ENCODE measurements at regions of chr20 and their contacts with region 1.

Region 1: DNA sequence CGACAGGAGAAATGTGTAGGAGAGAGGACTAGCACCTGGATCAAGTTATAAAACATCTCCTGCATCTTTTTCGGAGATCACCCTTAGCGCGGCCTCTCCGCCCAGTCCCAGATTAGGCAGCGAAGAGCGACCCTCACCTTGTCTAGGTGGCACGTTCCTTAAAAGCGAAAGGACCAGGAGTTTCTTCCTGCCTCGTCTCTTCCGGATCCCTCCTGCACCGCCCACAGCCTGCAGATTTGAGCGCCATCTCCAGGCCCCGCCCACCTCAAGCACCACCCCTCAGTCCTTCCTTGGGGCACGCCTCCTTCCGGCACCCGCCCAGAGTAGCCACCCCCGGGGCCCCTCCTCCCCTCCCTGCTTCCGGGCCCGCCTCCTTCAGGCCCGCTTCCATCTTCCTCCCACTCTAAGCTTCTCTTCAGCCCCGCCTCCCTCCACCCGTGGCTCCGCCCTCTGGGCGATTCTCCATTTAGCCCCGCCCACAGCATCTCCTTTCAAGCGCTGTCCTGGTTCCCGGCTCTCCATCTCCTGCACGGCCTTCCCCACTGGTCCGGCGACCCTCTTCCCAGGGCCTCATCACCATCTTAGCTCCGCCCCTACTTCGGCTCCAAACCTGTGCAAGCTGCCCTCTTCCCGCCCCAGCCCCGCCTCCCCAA is 662 bp upstream of the RALY start:
- DNase-seq: peak; percentile 97 to 100 (median 100)
- ATAC-seq: peak; percentile 91
- H3K4me3 ChIP-seq: peak overlapping the region; percentile 96
- H3K4me3 Mint-ChIP-seq: peak overlapping the region; percentile 87 to 99 (median 96)
- H3K27ac ChIP-seq: peak overlapping the region; percentile 97
- H3K27ac Mint-ChIP-seq: peak overlapping the region; percentile 91 to 99 (median 96)
- H3K4me1 ChIP-seq: peaks cover 32 to 43% of the 10 kb centered on the region in 2 donors
- H3K4me1 Mint-ChIP-seq: peaks cover 44 to 69% (median 60%) of the 10 kb centered on the region in 7 donors
- H3K27me3 ChIP-seq: no peaks in the 10 kb centered on the region
- H3K27me3 Mint-ChIP-seq: no peaks in the 10 kb centered on the region

Region 2: DNA sequence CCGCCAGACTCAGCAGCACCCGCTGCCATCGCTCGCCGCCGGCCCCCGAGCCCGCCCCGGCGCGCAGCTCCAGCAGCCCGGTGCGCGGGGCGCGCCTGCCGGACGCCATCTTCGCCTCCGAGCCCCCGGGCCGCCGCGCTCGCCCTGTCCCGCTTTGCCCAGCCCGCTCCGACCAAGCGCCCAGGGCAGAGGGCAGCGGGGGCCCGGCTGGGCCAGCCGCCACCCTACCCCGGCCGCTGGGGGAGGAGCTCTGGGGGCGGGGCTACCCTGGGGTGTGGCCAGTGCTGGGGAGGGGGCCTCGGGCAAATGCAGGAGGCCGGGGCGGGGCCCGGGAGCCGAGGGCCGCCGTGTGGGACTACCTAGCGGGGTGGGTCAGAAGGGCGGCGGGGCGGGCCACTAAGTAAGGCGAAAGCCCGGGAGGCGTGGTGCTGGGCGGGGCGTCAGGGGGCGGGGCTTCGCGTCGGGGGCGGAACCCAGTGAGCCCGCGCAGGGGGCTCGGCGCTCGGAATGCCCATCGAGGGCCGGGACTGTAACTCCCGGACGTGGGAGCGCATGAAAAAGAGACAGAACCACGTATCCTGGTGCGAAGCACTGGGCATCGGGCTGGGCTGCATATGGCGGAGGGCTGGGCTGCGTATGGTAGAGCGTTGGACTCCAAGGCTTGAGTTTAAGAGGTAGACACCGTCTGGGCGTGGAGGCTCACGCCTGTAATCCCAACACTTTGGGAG is 549.4 kb before region 1 on chr20 and contains the start of gene SNTA1:
- CTCF ChIA-PET with region 1: no interaction called
- POLR2A ChIA-PET with region 1: no interaction called
- intact Hi-C with region 1: loop called in 1 of 2 experiments (anchors 1 kb)
- DNase-seq: peak; percentile 51 to 90 (median 70)
- ATAC-seq: peak; percentile 84
- H3K4me3 ChIP-seq: peak within 1 kb of the TSS; percentile 96
- H3K4me3 Mint-ChIP-seq: peak within 1 kb of the TSS; percentile 82 to 96 (median 92)
- H3K27ac ChIP-seq: peak within 1 kb of the TSS; percentile 62
- H3K27ac Mint-ChIP-seq: peak within 1 kb of the TSS; percentile 69 to 95 (median 90)
- H3K4me1 ChIP-seq: peaks cover 10 to 11% of the 10 kb centered on the region in 2 donors
- H3K4me1 Mint-ChIP-seq: peaks cover 16 to 32% (median 22%) of the 10 kb centered on the region in 7 donors
- H3K27me3 ChIP-seq: no peaks in the 10 kb centered on the region
- H3K27me3 Mint-ChIP-seq: peaks cover 0 to 19% (median 0%) of the 10 kb centered on the region in 5 donors
- total RNA-seq, gene SNTA1: 2.0 to 3.2 (median 2.9) TPM

Region 3: DNA sequence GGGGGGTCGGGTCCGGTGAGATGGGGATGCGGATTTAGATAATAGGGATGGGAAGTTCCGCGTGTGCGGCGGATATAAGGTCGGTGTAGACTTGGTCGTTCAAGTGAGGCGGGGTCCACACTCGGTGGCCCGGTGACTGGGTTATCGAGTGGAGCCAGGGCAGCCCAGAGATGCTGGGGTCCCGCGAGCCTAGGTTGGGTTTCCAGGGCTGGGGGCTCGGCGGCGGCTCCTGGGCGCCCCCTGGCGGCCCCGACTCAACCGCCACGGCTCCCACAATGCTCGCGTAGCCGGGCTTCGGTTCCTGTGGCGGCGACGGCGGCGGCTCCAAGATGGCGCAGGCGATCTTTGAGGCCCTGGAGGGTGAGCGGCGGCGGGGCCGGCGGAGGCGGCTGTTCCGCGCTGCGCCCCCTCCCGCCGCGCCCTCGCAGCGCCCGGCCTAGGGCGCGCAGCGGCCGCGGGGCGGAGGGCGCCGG is 261.3 kb before region 1 on chr20 and contains the start of gene ZNF341:
- CTCF ChIA-PET with region 1: no interaction called
- POLR2A ChIA-PET with region 1: no interaction called
- intact Hi-C with region 1: loop called (anchors 1 kb)
- DNase-seq: peak in 7 of 9 donors; percentile 84 to 92 (median 88)
- ATAC-seq: peak; percentile 92
- H3K4me3 ChIP-seq: peak within 1 kb of the TSS; percentile 84
- H3K4me3 Mint-ChIP-seq: peak within 1 kb of the TSS; percentile 82 to 97 (median 90)
- H3K27ac ChIP-seq: peak within 1 kb of the TSS; percentile 75
- H3K27ac Mint-ChIP-seq: peak within 1 kb of the TSS; percentile 90 to 98 (median 97)
- H3K4me1 ChIP-seq: peaks cover 3 to 18% of the 10 kb centered on the region in 2 donors
- H3K4me1 Mint-ChIP-seq: peaks cover 12 to 36% (median 20%) of the 10 kb centered on the region in 7 donors
- H3K27me3 ChIP-seq: no peaks in the 10 kb centered on the region
- H3K27me3 Mint-ChIP-seq: peaks cover 0 to 3% (median 0%) of the 10 kb centered on the region in 5 donors
- total RNA-seq, gene ZNF341: 3.5 to 6.1 (median 5.5) TPM

Region 4: GRCh38 chr20:34037121-34037520 is 44.1 kb after region 1 on chr20:
- CTCF ChIA-PET with region 1: no interaction called
- POLR2A ChIA-PET with region 1: interaction called, 4 read pairs
- intact Hi-C with region 1: loop called in 1 of 2 experiments (anchors 2 kb)
- DNase-seq: peak in 8 of 9 donors; percentile 21 to 50 (median 43)
- ATAC-seq: peak; percentile 88
- H3K4me3 ChIP-seq: no peak overlapping the region
- H3K4me3 Mint-ChIP-seq: peak overlapping the region; percentile 49 to 80 (median 60)
- H3K27ac ChIP-seq: no peak overlapping the region
- H3K27ac Mint-ChIP-seq: peak overlapping the region in 8 of 9 donors; percentile 17 to 80 (median 63)
- H3K4me1 ChIP-seq: peaks cover 12 to 33% of the 10 kb centered on the region in 2 donors
- H3K4me1 Mint-ChIP-seq: peaks cover 48 to 98% (median 95%) of the 10 kb centered on the region in 7 donors
- H3K27me3 ChIP-seq: no peaks in the 10 kb centered on the region
- H3K27me3 Mint-ChIP-seq: no peaks in the 10 kb centered on the region

Region 5: DNA sequence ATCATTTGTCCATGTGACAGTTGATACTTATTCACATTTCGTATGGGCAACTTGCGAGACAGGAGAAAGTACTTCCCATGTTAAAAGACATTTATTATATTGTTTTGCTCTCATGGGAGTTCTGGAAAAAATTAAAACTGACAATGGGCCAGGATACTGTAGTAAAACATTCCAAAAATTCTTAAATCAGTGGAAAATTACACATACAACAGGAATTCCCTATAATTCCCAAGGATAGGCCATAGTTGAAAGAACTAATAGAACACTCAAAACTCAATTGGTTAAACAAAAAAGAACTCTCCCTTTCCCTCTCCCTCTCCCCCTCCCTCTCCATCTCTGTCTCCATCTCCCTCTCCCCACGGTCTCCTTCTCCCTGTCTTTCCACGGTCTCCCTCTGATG is 138.4 kb after region 1 on chr20:
- CTCF ChIA-PET with region 1: no interaction called
- POLR2A ChIA-PET with region 1: no interaction called
- intact Hi-C with region 1: no loop called
- DNase-seq: no peak
- ATAC-seq: no peak
- H3K4me3 ChIP-seq: no peak overlapping the region
- H3K4me3 Mint-ChIP-seq: no peak overlapping the region
- H3K27ac ChIP-seq: no peak overlapping the region
- H3K27ac Mint-ChIP-seq: no peak overlapping the region
- H3K4me1 ChIP-seq: no peaks in the 10 kb centered on the region
- H3K4me1 Mint-ChIP-seq: peaks cover 0 to 6% (median 4%) of the 10 kb centered on the region in 7 donors
- H3K27me3 ChIP-seq: no peaks in the 10 kb centered on the region
- H3K27me3 Mint-ChIP-seq: peaks cover 0 to 22% (median 7%) of the 10 kb centered on the region in 5 donors

Region 6: GRCh38 chr20:34363062-34363464 is 370.0 kb after region 1 on chr20 and contains the start of gene ITCH:
- CTCF ChIA-PET with region 1: no interaction called
- POLR2A ChIA-PET with region 1: no interaction called
- intact Hi-C with region 1: loop called in 1 of 2 experiments (anchors 5 kb)
- DNase-seq: peak; percentile 82 to 91 (median 88)
- ATAC-seq: peak; percentile 100
- H3K4me3 ChIP-seq: peak within 1 kb of the TSS; percentile 93
- H3K4me3 Mint-ChIP-seq: peak within 1 kb of the TSS; percentile 96 to 100 (median 98)
- H3K27ac ChIP-seq: peak within 1 kb of the TSS; percentile 98
- H3K27ac Mint-ChIP-seq: peak within 1 kb of the TSS; percentile 91 to 100 (median 98)
- H3K4me1 ChIP-seq: peaks cover 25 to 38% of the 10 kb centered on the region in 2 donors
- H3K4me1 Mint-ChIP-seq: peaks cover 26 to 50% (median 45%) of the 10 kb centered on the region in 7 donors
- H3K27me3 ChIP-seq: no peaks in the 10 kb centered on the region
- H3K27me3 Mint-ChIP-seq: peaks cover 0 to 3% (median 0%) of the 10 kb centered on the region in 5 donors
- total RNA-seq, gene ITCH: 50.8 to 70.4 (median 60.5) TPM

Region 7: DNA sequence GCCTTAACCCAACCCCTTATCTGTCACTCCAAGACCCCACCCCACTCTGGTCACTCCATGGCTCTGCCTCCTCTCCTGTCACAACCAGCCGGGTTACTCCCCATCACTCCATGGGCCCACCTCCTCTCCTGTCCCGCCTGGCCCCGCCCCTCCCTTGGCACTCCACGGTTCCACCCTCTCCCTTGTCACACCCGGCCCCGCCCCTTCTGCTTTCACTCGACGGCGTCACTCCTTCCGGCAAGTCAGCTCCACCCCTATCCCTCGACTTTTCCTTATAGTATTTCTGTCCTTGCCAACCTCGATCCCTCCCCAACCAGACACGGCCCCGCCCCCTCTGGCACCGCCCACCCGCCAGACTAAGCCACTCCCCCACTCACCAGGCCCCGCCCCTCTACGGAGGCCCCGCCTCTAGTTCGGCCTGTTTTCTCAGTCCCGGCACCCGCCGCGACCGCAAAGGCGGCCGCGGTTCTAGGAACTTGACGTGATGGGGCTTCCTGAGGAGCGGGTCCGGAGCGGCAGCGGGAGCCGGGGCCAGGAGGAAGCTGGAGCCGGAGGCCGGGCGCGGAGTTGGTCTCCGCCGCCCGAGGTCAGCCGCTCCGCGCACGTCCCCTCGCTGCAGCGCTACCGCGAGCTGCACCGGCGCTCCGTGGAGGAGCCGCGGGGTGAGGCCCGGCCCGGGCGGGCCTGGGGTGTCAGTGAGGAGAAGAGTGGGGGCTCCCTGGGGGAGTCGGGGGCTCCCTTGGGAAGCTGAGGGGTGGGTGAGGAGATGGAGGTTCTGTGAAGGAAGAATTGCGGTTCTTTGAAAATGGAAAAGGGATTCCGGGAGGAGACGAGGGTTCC is 883.3 kb after region 1 on chr20 and contains the start of gene ACSS2:
- CTCF ChIA-PET with region 1: no interaction called
- POLR2A ChIA-PET with region 1: no interaction called
- intact Hi-C with region 1: loop called in 1 of 2 experiments (anchors 1 kb)
- DNase-seq: peak; percentile 88 to 99 (median 92)
- ATAC-seq: peak; percentile 91
- H3K4me3 ChIP-seq: peak within 1 kb of the TSS; percentile 87
- H3K4me3 Mint-ChIP-seq: peak within 1 kb of the TSS; percentile 78 to 99 (median 90)
- H3K27ac ChIP-seq: peak within 1 kb of the TSS; percentile 74
- H3K27ac Mint-ChIP-seq: peak within 1 kb of the TSS; percentile 68 to 96 (median 88)
- H3K4me1 ChIP-seq: peaks cover 35 to 43% of the 10 kb centered on the region in 2 donors
- H3K4me1 Mint-ChIP-seq: peaks cover 47 to 79% (median 72%) of the 10 kb centered on the region in 7 donors
- H3K27me3 ChIP-seq: no peaks in the 10 kb centered on the region
- H3K27me3 Mint-ChIP-seq: no peaks in the 10 kb centered on the region
- total RNA-seq, gene ACSS2: 37.3 to 51.7 (median 43.3) TPM

Measured in naive thymus-derived CD4-positive, alpha-beta T cell (primary cell).